ENCODE measurements at regions of chr1 and their contacts with region 1.

Region 1: GRCh38 chr1:5967351-5968160 is 24.7 kb downstream of the NPHP4 start:
- DNase-seq: no peak
- ATAC-seq: no peak
- H3K4me3 ChIP-seq: no peak overlapping the region
- H3K27ac ChIP-seq: no peak overlapping the region
- H3K4me1 ChIP-seq: peaks cover 14% of the 10 kb centered on the region
- H3K27me3 ChIP-seq: no peaks in the 10 kb centered on the region; a peak in 1 of 5 replicates
- CTCF ChIP-seq: no peak
- EP300 ChIP-seq: no peak
- POLR2A ChIP-seq: no peak
- RAD21 ChIP-seq: no peak

Region 2: GRCh38 chr1:5915587-5916571 is 51.7 kb before region 1 on chr1:
- CTCF ChIA-PET with region 1: no interaction called
- POLR2A ChIA-PET with region 1: no interaction called
- in situ Hi-C with region 1: loop called (anchors 5 kb)
- intact Hi-C with region 1: no loop called
- DNase-seq: peak; percentile 30
- ATAC-seq: peak; percentile 81
- H3K4me3 ChIP-seq: no peak overlapping the region
- H3K27ac ChIP-seq: no peak overlapping the region
- H3K4me1 ChIP-seq: peaks cover 27% of the 10 kb centered on the region
- H3K27me3 ChIP-seq: no peaks in the 10 kb centered on the region
- CTCF ChIP-seq: peak; percentile 67
- EP300 ChIP-seq: no peak
- POLR2A ChIP-seq: no peak
- RAD21 ChIP-seq: no peak

Measured in HepG2 (cell line).